BJ (cell line): ENCODE measurements at regions of chr7 and their contacts with region 1.

Region 1: DNA sequence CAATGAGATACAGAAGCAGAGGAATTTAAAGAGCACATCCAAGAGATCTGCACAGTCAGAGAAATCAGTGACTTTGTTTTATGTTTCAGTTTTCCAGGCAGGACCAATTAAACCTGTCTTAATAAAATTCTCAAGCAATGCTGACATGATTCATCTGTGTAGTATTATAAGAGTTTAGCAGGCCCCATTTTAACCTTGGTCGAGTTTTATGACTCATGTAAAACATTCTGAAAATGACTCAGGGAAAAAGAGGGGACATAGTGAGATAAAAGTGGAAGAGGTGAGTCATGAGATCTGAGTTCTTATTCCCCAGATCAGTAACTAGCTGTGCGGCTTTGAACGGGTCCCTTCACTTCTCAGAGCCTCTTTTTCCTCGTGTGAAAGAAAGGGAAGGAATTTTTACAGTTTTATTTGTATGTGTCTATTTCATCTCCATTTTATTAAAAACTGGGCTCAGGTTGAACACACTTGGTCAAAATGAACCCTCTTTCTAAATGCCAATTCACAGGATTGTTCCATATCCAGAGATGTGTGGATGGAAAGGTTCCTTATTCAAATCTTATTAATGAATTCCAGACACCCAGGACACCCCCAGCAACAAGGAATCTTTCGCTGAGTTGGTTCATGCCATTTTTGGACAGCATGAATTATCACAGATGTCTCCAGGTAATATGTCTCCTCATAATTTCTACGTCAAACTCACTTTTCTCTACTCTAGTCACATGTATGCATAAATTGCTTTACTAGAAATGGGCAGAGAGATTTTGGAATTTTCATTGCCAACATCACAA is 143.2 kb downstream of the JAZF1 start:
- DNase-seq: peak; percentile 99
- H3K4me3 ChIP-seq: no peak overlapping the region
- H3K27me3 ChIP-seq: no peaks in the 10 kb centered on the region
- CTCF ChIP-seq: no peak

Region 2: GRCh38 chr7:28020302-28020940 is 17.0 kb before region 1 on chr7:
- CTCF ChIA-PET with region 1: interaction called, 10 read pairs
- POLR2A ChIA-PET with region 1: no interaction called
- DNase-seq: no peak
- H3K4me3 ChIP-seq: no peak overlapping the region
- H3K27me3 ChIP-seq: no peaks in the 10 kb centered on the region
- CTCF ChIP-seq: peak; percentile 82

Region 3: GRCh38 chr7:28052933-28053332 is 15.5 kb after region 1 on chr7:
- CTCF ChIA-PET with region 1: interaction called, 3 read pairs
- POLR2A ChIA-PET with region 1: interaction called, 11 read pairs
- DNase-seq: no peak
- H3K4me3 ChIP-seq: no peak overlapping the region
- H3K27me3 ChIP-seq: no peaks in the 10 kb centered on the region
- CTCF ChIP-seq: no peak

Region 4: DNA sequence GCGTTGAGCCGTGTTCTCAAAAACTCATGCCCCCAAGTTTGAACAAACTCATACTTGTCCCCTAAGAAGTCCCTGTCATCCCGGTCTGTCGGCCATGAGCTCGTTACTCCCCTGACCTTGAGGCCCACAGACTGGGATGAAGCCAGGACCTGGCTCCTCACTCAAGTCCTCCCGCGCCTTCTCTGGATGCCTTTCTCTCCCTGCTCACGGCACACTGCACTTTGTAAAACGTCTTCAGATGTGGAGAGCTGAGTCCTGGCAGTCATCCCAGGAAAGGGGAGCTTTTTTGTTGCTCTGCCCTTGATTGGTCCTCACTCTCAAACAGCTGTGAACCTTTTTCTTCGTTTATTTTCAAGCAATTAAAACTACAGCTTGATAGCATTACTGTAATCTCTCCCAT is 32.4 kb after region 1 on chr7:
- CTCF ChIA-PET with region 1: interaction called, 14 read pairs
- POLR2A ChIA-PET with region 1: interaction called, 6 read pairs
- DNase-seq: no peak
- H3K4me3 ChIP-seq: no peak overlapping the region
- H3K27me3 ChIP-seq: no peaks in the 10 kb centered on the region
- CTCF ChIP-seq: no peak